ENCODE measurements at regions of chr5 and their contacts with region 1.

Region 1: DNA sequence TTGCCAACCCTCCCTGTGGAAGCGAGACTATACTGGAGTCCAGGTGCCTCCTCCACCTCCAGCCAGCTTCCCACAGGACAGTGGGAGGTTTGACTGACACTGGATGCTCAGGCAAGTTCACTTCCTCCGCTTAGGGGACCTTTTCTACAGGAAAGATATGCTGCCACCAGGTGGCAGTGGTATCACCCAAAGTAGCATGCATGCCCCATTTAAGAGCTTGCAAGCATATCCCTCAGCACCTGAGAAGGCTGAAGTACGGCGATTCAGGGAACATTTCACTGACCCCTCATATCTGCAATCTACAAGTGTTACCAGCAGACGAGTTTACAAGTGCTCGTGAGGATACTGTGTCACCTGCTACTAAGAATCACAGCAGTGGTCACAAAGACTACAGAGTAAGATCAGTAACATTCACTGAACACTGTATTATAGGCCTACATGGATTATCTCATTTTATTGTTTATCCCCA is 75.5 kb downstream of the KLHL3 start:
- DNase-seq: peak; percentile 90
- H3K4me3 ChIP-seq: no peak overlapping the region
- H3K27ac ChIP-seq: no peak overlapping the region
- H3K4me1 ChIP-seq: peaks cover 4% of the 10 kb centered on the region
- H3K27me3 ChIP-seq: no peaks in the 10 kb centered on the region
- CTCF ChIP-seq: peak; percentile 75 to 78
- POLR2A ChIP-seq: no peak

Region 2: DNA sequence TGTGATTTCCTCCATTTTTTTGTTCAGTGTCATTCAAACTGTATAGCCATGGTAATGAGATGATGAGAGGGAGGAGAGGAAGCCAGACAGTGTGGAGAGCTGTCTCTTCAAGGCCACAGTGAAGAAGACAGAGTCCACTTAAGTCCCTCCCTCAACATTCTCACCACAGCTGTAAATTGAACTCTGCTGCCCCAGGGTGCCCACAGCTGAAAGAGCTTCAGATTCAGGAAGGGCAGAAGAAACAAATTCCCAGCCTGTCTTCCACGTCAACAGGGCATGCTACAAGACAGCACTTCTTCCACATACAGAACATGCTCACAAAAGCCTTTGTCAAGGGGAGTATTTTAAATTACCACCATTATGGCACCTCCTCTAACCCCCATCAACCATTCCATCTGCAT is 24.9 kb before region 1 on chr5:
- CTCF ChIA-PET with region 1: interaction called, 121 read pairs
- POLR2A ChIA-PET with region 1: no interaction called
- dilution Hi-C with region 1: no loop called
- intact Hi-C with region 1: no loop called
- DNase-seq: peak; percentile 51
- H3K4me3 ChIP-seq: no peak overlapping the region
- H3K27ac ChIP-seq: no peak overlapping the region
- H3K4me1 ChIP-seq: no peaks in the 10 kb centered on the region
- H3K27me3 ChIP-seq: no peaks in the 10 kb centered on the region
- CTCF ChIP-seq: no peak
- POLR2A ChIP-seq: no peak

Region 3: GRCh38 chr5:137672019-137672418 is 11.6 kb after region 1 on chr5:
- CTCF ChIA-PET with region 1: interaction called, 47 read pairs
- POLR2A ChIA-PET with region 1: no interaction called
- dilution Hi-C with region 1: no loop called
- intact Hi-C with region 1: no loop called
- DNase-seq: no peak
- H3K4me3 ChIP-seq: no peak overlapping the region
- H3K27ac ChIP-seq: no peak overlapping the region
- H3K4me1 ChIP-seq: no peaks in the 10 kb centered on the region
- H3K27me3 ChIP-seq: no peaks in the 10 kb centered on the region
- CTCF ChIP-seq: no peak
- POLR2A ChIP-seq: no peak

Region 4: DNA sequence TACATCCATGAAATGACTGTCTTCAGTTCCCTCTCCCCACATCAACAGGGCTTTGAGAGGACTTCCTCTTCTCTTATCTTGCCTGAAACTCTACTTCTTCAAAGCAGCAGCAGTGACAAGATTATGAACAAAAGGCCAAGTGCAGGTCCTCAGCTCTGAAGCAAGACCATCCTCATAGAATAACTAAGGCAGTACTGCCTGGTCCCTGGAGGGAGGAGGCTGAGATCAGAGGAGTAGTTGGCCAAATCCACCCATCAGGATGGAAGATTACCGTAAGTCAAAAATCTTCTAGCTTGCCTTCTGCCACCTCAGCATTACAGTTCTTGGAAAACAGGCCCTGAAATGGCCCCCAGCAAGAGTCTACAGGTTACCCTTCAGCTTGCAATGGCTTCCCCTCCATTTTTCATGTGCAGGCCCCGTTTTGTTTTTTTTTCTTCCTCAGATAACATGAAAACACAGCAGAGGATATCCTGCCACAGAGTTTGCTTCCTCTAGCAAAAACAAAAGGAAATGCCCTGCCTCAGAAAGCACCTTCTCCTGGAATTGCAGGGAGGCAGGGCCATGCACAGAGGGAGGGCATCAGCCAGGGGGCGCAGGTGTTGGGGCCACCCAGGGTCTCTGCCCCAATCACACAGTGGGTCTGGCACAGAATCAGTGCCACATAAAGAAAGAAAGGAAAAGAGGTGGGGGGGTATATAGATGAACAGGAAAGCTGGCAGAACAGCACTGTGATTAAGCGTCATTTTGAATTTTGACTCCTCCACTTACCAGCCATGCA is 35.5 kb after region 1 on chr5:
- CTCF ChIA-PET with region 1: interaction called, 107 read pairs
- POLR2A ChIA-PET with region 1: no interaction called
- dilution Hi-C with region 1: no loop called
- intact Hi-C with region 1: loop called (anchors 1 kb)
- DNase-seq: peak; percentile 98
- H3K4me3 ChIP-seq: no peak overlapping the region
- H3K27ac ChIP-seq: peak overlapping the region; percentile 85
- H3K4me1 ChIP-seq: peaks cover 45% of the 10 kb centered on the region
- H3K27me3 ChIP-seq: no peaks in the 10 kb centered on the region
- CTCF ChIP-seq: peak; percentile 61 to 70
- POLR2A ChIP-seq: no peak

Region 5: GRCh38 chr5:137714946-137715345 is 54.6 kb after region 1 on chr5:
- CTCF ChIA-PET with region 1: interaction called, 45 read pairs
- POLR2A ChIA-PET with region 1: no interaction called
- dilution Hi-C with region 1: no loop called
- intact Hi-C with region 1: no loop called
- DNase-seq: peak; percentile 60
- H3K4me3 ChIP-seq: no peak overlapping the region
- H3K27ac ChIP-seq: no peak overlapping the region
- H3K4me1 ChIP-seq: no peaks in the 10 kb centered on the region
- H3K27me3 ChIP-seq: no peaks in the 10 kb centered on the region
- CTCF ChIP-seq: no peak
- POLR2A ChIP-seq: no peak

Region 6: GRCh38 chr5:137735555-137736284 is 75.3 kb after region 1 on chr5 and contains the start of gene KLHL3:
- CTCF ChIA-PET with region 1: interaction called, 721 read pairs
- POLR2A ChIA-PET with region 1: no interaction called
- dilution Hi-C with region 1: no loop called
- intact Hi-C with region 1: loop called (anchors 1 kb)
- DNase-seq: peak; percentile 81
- H3K4me3 ChIP-seq: peak within 1 kb of the TSS; percentile 56 to 74 (median 64)
- H3K27ac ChIP-seq: peak within 1 kb of the TSS; percentile 76
- H3K4me1 ChIP-seq: peaks cover 40% of the 10 kb centered on the region
- H3K27me3 ChIP-seq: no peaks in the 10 kb centered on the region
- CTCF ChIP-seq: peak; percentile 16 to 26
- POLR2A ChIP-seq: peak; percentile 71
- total RNA-seq, gene KLHL3: 13.6 and 13.9 TPM in 2 replicates

Region 7: DNA sequence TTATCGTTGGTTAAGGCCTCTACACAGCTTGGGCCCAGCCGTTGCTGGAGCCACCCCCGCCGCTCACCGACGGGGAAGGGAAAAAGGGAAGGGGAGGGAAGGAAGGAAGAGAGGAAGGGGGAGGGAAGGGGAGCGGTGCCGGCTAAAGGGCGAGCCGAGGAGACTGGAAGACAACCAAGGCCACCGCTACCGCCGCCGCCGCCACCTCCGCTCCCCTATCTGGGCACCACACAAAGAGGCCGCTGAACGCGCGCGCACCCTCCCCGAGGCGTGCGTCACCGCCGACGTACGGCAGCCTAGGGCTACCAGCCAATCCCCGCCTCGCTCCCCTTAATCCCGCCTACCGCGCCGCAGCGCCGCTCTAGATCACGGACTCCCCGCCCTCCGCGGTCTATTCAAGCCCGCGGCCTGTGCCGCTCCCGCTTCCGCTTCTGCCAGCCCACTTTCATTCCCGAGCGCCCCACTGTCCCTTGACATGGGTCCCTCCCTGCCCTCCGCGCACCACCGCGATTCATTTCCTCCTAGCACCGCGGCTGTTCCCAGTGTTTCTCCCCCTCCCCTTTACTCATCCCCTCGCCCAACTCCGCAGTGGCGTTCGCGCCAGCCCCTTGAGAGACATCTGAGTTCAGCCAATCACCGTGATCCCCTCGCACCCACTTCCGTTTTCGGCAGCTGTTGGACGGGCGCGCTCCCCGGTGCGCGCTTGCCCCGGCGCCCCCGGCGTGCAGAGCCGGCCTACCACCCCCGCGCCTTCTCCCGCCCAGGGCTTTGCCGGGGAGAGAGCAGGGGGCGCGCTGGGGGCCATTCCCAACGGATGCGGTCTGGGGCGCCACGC is 94.0 kb after region 1 on chr5 and contains the start of gene HNRNPA0:
- CTCF ChIA-PET with region 1: interaction called, 721 read pairs
- POLR2A ChIA-PET with region 1: no interaction called
- dilution Hi-C with region 1: loop called (anchors 25 kb)
- intact Hi-C with region 1: no loop called
- DNase-seq: peak; percentile 98
- H3K4me3 ChIP-seq: peak within 1 kb of the TSS; percentile 88 to 99 (median 94)
- H3K27ac ChIP-seq: peak within 1 kb of the TSS; percentile 92
- H3K4me1 ChIP-seq: peaks cover 18% of the 10 kb centered on the region
- H3K27me3 ChIP-seq: peaks cover 0 to 2% of the 10 kb centered on the region in 2 experiments
- CTCF ChIP-seq: no peak
- POLR2A ChIP-seq: peak; percentile 97
- total RNA-seq, gene HNRNPA0: 37.5 and 37.9 TPM in 2 replicates